CD4-positive, alpha-beta T cell (primary cell): ENCODE measurements at regions of chr17 and their contacts with region 1.

Region 1: DNA sequence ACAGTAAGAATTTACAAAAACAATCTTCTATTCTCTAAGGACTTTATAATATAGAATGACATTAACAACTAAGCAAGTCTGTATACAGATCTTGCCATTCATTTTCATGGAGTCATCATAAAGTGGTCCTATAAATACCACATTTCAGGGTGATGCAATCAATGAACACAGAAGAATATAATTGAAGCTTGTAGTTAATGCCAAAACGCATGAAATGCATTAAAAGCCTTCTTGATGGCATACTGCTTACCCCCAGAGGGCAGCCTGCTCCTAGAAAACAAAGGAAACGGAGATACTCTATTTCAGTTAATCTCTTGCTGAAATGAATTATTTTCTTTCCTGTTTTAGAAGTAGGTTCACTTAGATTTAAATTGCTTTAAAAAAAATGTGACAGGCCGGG is 45.2 kb upstream of the STAC2 start:
- DNase-seq: peak in 2 of 14 experiments; percentile 6 to 10
- ATAC-seq: no peak
- H3K4me3 ChIP-seq: no peak overlapping the region
- H3K4me3 Mint-ChIP-seq: no peak overlapping the region
- H3K27ac ChIP-seq: no peak overlapping the region
- H3K27ac Mint-ChIP-seq: no peak overlapping the region
- H3K4me1 ChIP-seq: no peaks in the 10 kb centered on the region
- H3K4me1 Mint-ChIP-seq: no peaks in the 10 kb centered on the region
- H3K27me3 ChIP-seq: no peaks in the 10 kb centered on the region
- H3K27me3 Mint-ChIP-seq: no peaks in the 10 kb centered on the region
- CTCF ChIP-seq: no peak

Region 2: DNA sequence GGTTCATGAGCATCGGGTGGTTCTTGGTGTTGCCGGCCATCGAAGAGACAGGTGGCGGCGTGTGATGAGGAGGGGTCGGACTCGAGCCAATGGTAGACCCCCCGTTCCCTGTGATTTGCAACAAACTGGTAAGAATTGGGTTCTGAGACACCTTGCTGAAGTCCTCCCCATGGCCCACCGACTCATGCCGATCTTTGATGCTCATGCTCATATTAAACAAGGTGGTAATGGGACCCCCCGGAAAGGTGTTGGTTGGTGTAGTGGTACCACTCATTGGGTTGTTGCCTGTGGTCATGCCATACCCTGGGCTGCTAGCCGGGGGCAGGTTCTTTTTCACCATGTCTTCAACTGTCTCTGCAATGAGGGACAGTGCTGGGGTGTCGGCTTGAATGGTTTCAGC is 139.4 kb after region 1 on chr17:
- CTCF ChIA-PET with region 1: no interaction called
- POLR2A ChIA-PET with region 1: no interaction called
- intact Hi-C with region 1: loop called in 1 of 2 experiments (anchors 10 kb)
- DNase-seq: no peak
- ATAC-seq: no peak
- H3K4me3 ChIP-seq: no peak overlapping the region
- H3K4me3 Mint-ChIP-seq: no peak overlapping the region
- H3K27ac ChIP-seq: no peak overlapping the region
- H3K27ac Mint-ChIP-seq: no peak overlapping the region
- H3K4me1 ChIP-seq: no peaks in the 10 kb centered on the region
- H3K4me1 Mint-ChIP-seq: peaks cover 5% of the 10 kb centered on the region
- H3K27me3 ChIP-seq: no peaks in the 10 kb centered on the region
- H3K27me3 Mint-ChIP-seq: no peaks in the 10 kb centered on the region
- CTCF ChIP-seq: no peak

Region 3: GRCh38 chr17:39527220-39527813 is 256.4 kb after region 1 on chr17:
- CTCF ChIA-PET with region 1: no interaction called
- POLR2A ChIA-PET with region 1: no interaction called
- intact Hi-C with region 1: loop called in 1 of 2 experiments (anchors 10 kb)
- DNase-seq: peak in 3 of 14 experiments; percentile 27 to 30 (median 27)
- ATAC-seq: no peak
- H3K4me3 ChIP-seq: no peak overlapping the region
- H3K4me3 Mint-ChIP-seq: no peak overlapping the region
- H3K27ac ChIP-seq: no peak overlapping the region
- H3K27ac Mint-ChIP-seq: no peak overlapping the region
- H3K4me1 ChIP-seq: no peaks in the 10 kb centered on the region
- H3K4me1 Mint-ChIP-seq: no peaks in the 10 kb centered on the region
- H3K27me3 ChIP-seq: no peaks in the 10 kb centered on the region
- H3K27me3 Mint-ChIP-seq: no peaks in the 10 kb centered on the region
- CTCF ChIP-seq: peak; percentile 46